Posterior vena cava (tissue), 2 donors: ENCODE measurements at regions of chr6 and their contacts with region 1.

Region 1: GRCh38 chr6:82693094-82693493 is 329.5 kb downstream of the TPBG start:
- DNase-seq: no peak

Region 2: GRCh38 chr6:82617648-82618047 is 75.4 kb before region 1 on chr6:
- intact Hi-C with region 1: loop called in 1 of 2 experiments (anchors 2 kb)
- DNase-seq: no peak